HCT116 (cell line): ENCODE measurements at regions of chr12 and their contacts with region 1.

Region 1: GRCh38 chr12:118357257-118358007 is 15.3 kb downstream of the TAOK3 start:
- DNase-seq: peak; percentile 63
- ATAC-seq: peak; percentile 60; the same call in 1 of the 2 replicates
- H3K4me3 ChIP-seq: peak overlapping the region in 1 of 2 experiments; percentile 2; a peak in 1 of 4 replicates
- H3K27ac ChIP-seq: no peak overlapping the region; the same call in 1 of the 2 replicates
- H3K4me1 ChIP-seq: peaks cover 22 to 30% of the 10 kb centered on the region in 2 experiments
- H3K27me3 ChIP-seq: no peaks in the 10 kb centered on the region
- CTCF ChIP-seq: peak in 2 of 3 experiments; percentile 18 to 51; a peak in 2 of 6 replicates
- POLR2A ChIP-seq: no peak
- RAD21 ChIP-seq: 0 out of 2 replicates have a peak, but pooled peaks have one; percentile 16

Region 2: GRCh38 chr12:118150625-118151024 is 206.8 kb before region 1 on chr12:
- CTCF ChIA-PET with region 1: no interaction called
- POLR2A ChIA-PET with region 1: interaction called, 4 read pairs
- RAD21 ChIA-PET with region 1: no interaction called
- intact Hi-C with region 1: loop called (anchors 2 kb)
- DNase-seq: no peak
- ATAC-seq: no peak
- H3K4me3 ChIP-seq: no peak overlapping the region
- H3K27ac ChIP-seq: no peak overlapping the region
- H3K4me1 ChIP-seq: no peaks in the 10 kb centered on the region
- H3K27me3 ChIP-seq: no peaks in the 10 kb centered on the region
- CTCF ChIP-seq: no peak
- POLR2A ChIP-seq: no peak
- RAD21 ChIP-seq: no peak

Region 3: GRCh38 chr12:118206107-118206412 is 151.4 kb before region 1 on chr12:
- CTCF ChIA-PET with region 1: no interaction called
- POLR2A ChIA-PET with region 1: no interaction called
- RAD21 ChIA-PET with region 1: no interaction called
- intact Hi-C with region 1: no loop called
- DNase-seq: no peak
- ATAC-seq: no peak
- H3K4me3 ChIP-seq: no peak overlapping the region
- H3K27ac ChIP-seq: no peak overlapping the region
- H3K4me1 ChIP-seq: no peaks in the 10 kb centered on the region
- H3K27me3 ChIP-seq: no peaks in the 10 kb centered on the region
- CTCF ChIP-seq: no peak
- POLR2A ChIP-seq: no peak
- RAD21 ChIP-seq: no peak

Region 4: GRCh38 chr12:118319627-118320026 is 37.8 kb before region 1 on chr12:
- CTCF ChIA-PET with region 1: no interaction called
- POLR2A ChIA-PET with region 1: no interaction called
- RAD21 ChIA-PET with region 1: no interaction called
- intact Hi-C with region 1: no loop called
- DNase-seq: no peak
- ATAC-seq: no peak
- H3K4me3 ChIP-seq: no peak overlapping the region
- H3K27ac ChIP-seq: no peak overlapping the region
- H3K4me1 ChIP-seq: peaks cover 0 to 4% of the 10 kb centered on the region in 2 experiments; a peak in 2 of 4 replicates
- H3K27me3 ChIP-seq: no peaks in the 10 kb centered on the region
- CTCF ChIP-seq: no peak
- POLR2A ChIP-seq: no peak
- RAD21 ChIP-seq: no peak